ENCODE measurements at regions of chr6 and their contacts with region 1.

Region 1: GRCh38 chr6:20572940-20573339 is 38.7 kb downstream of the CDKAL1 start:
- DNase-seq: peak; percentile 83
- H3K4me3 ChIP-seq: no peak overlapping the region
- H3K27ac ChIP-seq: peak overlapping the region; percentile 49
- H3K4me1 ChIP-seq: peaks cover 35% of the 10 kb centered on the region
- H3K27me3 ChIP-seq: no peaks in the 10 kb centered on the region
- CTCF ChIP-seq: no peak

Region 2: GRCh38 chr6:21199262-21199661 is 626.3 kb after region 1 on chr6:
- CTCF ChIA-PET with region 1: no interaction called
- POLR2A ChIA-PET with region 1: no interaction called
- intact Hi-C with region 1: loop called (anchors 10 kb)
- DNase-seq: peak; percentile 91
- H3K4me3 ChIP-seq: no peak overlapping the region
- H3K27ac ChIP-seq: peak overlapping the region; percentile 37
- H3K4me1 ChIP-seq: peaks cover 73% of the 10 kb centered on the region
- H3K27me3 ChIP-seq: no peaks in the 10 kb centered on the region
- CTCF ChIP-seq: no peak